CD4-positive, alpha-beta T cell (primary cell): ENCODE measurements at regions of chr12 and their contacts with region 1.

Region 1: GRCh38 chr12:110501752-110502738 is at the starts of genes RAD9B and VPS29:
- DNase-seq: peak; percentile 97 to 100 (median 98)
- ATAC-seq: peak; percentile 92
- H3K4me3 ChIP-seq: peak within 1 kb of the TSS; percentile 96
- H3K4me3 Mint-ChIP-seq: peak within 1 kb of the TSS; percentile 98
- H3K27ac ChIP-seq: peak within 1 kb of the TSS; percentile 90 to 93
- H3K27ac Mint-ChIP-seq: peak within 1 kb of the TSS; percentile 90
- H3K4me1 ChIP-seq: peaks cover 24% of the 10 kb centered on the region
- H3K4me1 Mint-ChIP-seq: peaks cover 39% of the 10 kb centered on the region
- H3K27me3 ChIP-seq: no peaks in the 10 kb centered on the region
- H3K27me3 Mint-ChIP-seq: no peaks in the 10 kb centered on the region
- CTCF ChIP-seq: no peak
- total RNA-seq, gene RAD9B: 0.31 to 0.63 TPM
- total RNA-seq, gene VPS29: 62.5 to 64.9 TPM

Region 2: DNA sequence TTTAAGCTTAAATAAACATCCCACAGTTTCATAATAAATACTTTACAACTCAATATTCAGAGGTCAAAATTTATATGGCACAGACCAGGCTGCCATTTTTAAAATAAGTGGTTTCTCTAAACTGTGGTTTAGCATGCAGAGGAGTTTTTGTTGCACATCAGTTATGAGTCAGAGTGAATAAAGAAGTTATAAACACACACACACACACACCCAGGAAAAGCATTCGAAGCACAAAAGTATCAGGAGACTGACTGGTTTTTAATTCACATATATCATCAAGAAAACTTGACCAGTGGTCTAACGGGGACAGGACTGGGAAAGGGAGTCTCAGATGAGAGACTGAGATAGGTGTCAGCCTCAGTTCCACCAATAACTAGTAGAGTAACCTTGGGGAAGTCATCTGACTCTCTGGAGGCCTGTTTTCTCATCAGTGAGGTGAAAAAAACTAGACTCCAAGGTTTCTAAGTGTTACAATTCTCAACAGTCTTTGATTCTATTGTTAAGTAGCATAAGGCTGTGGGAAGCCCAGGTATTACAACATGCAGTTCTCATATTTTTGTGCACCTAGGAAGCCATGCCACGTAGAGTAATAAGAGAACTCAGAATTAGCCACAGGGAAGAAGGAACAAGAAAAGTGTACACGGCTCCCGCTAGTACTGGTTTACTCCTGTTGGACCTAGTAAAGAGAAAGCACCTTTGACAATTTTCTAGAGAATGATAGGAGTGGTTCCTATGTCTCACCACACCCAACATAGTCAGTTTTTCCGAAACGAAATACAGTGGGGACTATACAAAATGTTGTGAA is 75.9 kb after region 1 on chr12:
- CTCF ChIA-PET with region 1: no interaction called
- POLR2A ChIA-PET with region 1: interaction called, 11 read pairs
- intact Hi-C with region 1: loop called (anchors 5 kb)
- DNase-seq: peak in 6 of 14 experiments; percentile 19 to 83 (median 52)
- ATAC-seq: peak; percentile 27
- H3K4me3 ChIP-seq: peak overlapping the region; percentile 13
- H3K4me3 Mint-ChIP-seq: peak overlapping the region; percentile 96
- H3K27ac ChIP-seq: peak overlapping the region; percentile 67 to 79
- H3K27ac Mint-ChIP-seq: peak overlapping the region; percentile 92
- H3K4me1 ChIP-seq: peaks cover 51% of the 10 kb centered on the region
- H3K4me1 Mint-ChIP-seq: peaks cover 80% of the 10 kb centered on the region
- H3K27me3 ChIP-seq: no peaks in the 10 kb centered on the region
- H3K27me3 Mint-ChIP-seq: no peaks in the 10 kb centered on the region
- CTCF ChIP-seq: no peak

Region 3: DNA sequence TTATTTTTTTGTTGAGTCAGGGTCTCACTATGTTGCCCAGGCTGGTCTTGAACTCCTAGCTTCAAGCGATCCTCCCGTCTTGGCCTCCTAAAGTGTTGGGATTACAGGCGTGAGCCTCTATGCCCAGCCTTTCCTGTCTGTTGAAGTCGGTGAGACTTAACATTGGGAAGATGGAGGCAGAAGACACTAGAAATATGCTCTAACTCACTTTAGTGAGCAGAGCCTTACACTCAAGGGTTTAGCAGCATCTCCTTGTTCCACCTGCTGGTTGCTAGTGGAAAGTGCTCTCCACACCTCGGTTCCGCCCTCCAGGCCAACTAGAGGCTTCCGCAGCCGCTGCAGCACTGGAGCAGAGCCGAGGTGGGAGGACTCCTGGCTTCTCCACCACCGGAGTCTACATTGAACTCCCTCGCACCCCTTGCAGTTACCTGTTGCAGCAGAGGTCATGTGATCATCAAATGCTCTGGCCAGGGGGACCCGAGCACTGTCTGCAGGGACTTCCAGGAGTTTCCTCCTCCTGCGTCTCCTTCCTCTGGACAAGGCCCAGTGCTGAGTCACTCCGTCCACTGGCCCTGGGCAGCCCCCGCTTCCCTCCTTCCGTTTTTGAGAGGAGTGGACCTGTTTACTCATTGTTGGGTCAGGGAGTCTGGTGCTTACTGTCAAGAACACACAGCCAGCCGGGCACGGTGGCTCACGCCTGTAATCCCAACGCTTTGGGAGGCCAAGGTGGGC is 196.3 kb after region 1 on chr12:
- CTCF ChIA-PET with region 1: no interaction called
- POLR2A ChIA-PET with region 1: no interaction called
- intact Hi-C with region 1: no loop called
- DNase-seq: peak; percentile 66 to 90 (median 73)
- ATAC-seq: peak; percentile 100
- H3K4me3 ChIP-seq: no peak overlapping the region
- H3K4me3 Mint-ChIP-seq: no peak overlapping the region
- H3K27ac ChIP-seq: no peak overlapping the region
- H3K27ac Mint-ChIP-seq: peak overlapping the region; percentile 21
- H3K4me1 ChIP-seq: peaks cover 10% of the 10 kb centered on the region
- H3K4me1 Mint-ChIP-seq: peaks cover 17% of the 10 kb centered on the region
- H3K27me3 ChIP-seq: no peaks in the 10 kb centered on the region
- H3K27me3 Mint-ChIP-seq: no peaks in the 10 kb centered on the region
- CTCF ChIP-seq: peak; percentile 86